ENCODE measurements at regions of chr1 and their contacts with region 1.

Region 1: GRCh38 chr1:114319418-114319817 is 165.7 kb upstream of the SYT6 start:
- DNase-seq: no peak
- CTCF ChIP-seq: no peak

Region 2: GRCh38 chr1:114330451-114330983 is 11.1 kb after region 1 on chr1:
- CTCF ChIA-PET with region 1: interaction called, 22 read pairs
- POLR2A ChIA-PET with region 1: no interaction called
- DNase-seq: no peak
- CTCF ChIP-seq: no peak

Region 3: GRCh38 chr1:114341299-114341698 is 21.9 kb after region 1 on chr1:
- CTCF ChIA-PET with region 1: no interaction called
- POLR2A ChIA-PET with region 1: no interaction called
- DNase-seq: no peak
- CTCF ChIP-seq: no peak

Measured in GM10248 (cell line).